MCF 10A (cell line): ENCODE measurements at regions of chr12 and their contacts with region 1.

Region 1: GRCh38 chr12:40208707-40209446 is 15.9 kb upstream of the LRRK2 start:
- DNase-seq: no peak
- H3K4me3 Mint-ChIP-seq: no peak overlapping the region
- H3K27ac Mint-ChIP-seq: peak overlapping the region; percentile 13
- H3K4me1 Mint-ChIP-seq: peaks cover 19% of the 10 kb centered on the region
- H3K27me3 Mint-ChIP-seq: no peaks in the 10 kb centered on the region
- CTCF ChIP-seq: no peak

Region 2: DNA sequence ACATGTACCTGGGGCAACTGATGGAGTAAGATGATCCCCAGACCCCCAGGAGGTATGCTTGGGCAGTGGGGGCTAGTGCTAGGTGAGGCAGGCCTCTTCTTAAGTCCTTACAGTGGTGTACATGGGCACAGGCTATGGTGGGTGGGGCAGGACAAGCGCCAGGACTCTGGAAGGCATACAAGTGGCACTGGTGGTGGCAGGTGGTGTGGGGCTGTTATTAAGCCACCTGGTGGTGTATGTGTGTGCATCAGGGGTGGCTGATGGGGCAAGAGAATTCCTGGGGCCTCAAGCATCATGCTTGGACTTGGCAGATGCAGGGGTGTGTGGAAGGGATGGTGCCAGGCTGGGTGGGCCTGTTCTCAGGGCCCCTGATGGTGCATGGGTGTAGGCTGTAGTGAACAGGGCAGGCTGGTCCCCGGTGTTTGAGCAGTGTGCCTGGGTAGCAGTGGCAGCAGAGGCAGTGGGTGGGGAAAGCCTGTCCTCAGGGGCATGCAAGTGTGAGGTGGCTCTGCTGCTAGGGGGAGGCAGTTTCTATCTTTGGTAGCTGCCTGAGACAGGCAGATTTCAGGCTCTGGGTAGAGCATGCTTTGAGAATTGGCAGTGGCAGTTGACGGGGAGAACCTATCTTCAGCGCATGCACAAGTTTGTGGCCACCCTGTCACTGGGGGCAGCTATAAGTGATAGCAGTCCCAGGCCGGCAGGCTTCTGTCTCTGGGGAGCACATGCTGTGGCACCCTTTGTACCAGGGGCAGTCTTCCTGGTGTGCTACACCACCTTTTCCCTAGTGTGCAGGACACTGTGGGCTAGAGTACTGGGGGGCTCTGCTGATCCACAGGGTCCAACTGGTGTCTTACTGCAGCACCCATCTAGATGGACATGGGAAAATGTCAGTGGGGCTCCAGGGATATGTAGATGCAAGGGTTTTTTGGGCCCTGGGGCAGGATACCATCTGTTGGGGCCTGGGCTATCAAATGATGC is 536.7 kb before region 1 on chr12:
- CTCF ChIA-PET with region 1: no interaction called
- POLR2A ChIA-PET with region 1: no interaction called
- intact Hi-C with region 1: no loop called
- DNase-seq: no peak
- H3K4me3 Mint-ChIP-seq: no peak overlapping the region
- H3K27ac Mint-ChIP-seq: no peak overlapping the region
- H3K4me1 Mint-ChIP-seq: no peaks in the 10 kb centered on the region
- H3K27me3 Mint-ChIP-seq: no peaks in the 10 kb centered on the region
- CTCF ChIP-seq: no peak

Region 3: DNA sequence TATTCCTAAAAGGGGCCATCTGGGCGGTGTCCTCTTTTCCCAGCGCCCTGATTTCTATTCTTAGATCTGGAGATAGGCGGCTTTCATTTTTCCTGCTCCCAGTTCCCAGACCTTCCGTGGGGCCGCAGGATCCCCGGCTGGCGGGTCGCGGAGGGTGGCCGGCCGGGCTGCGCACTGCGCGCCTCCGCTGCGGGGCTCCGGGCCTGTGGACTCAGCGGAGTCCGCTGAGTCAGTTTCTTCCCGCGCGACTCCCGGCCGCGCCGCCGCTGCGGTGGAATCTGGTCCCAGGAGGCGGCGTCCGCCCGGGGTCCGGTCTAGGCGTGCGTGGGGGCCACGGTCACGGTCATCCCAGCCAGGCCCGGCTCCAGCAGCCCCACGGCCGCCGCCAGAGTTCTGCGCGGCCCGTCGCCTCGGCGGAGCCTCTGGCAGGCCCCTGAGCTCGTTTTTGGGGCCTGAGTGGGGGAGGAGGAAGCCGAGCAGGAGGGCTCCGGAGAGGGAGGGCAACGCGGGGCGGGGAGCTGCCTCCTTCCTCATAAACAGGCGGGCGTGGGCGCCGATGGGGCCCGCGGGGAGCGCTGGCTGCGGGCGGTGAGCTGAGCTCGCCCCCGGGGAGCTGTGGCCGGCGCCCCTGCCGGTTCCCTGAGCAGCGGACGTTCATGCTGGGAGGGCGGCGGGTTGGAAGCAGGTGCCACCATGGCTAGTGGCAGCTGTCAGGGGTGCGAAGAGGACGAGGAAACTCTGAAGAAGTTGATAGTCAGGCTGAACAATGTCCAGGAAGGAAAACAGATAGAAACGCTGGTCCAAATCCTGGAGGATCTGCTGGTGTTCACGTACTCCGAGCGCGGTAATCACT is 15.8 kb after region 1 on chr12 and contains the start of gene LRRK2:
- CTCF ChIA-PET with region 1: interaction called, 5 read pairs
- POLR2A ChIA-PET with region 1: interaction called, 20 read pairs
- intact Hi-C with region 1: no loop called
- DNase-seq: peak; percentile 58
- H3K4me3 Mint-ChIP-seq: peak within 1 kb of the TSS; percentile 71
- H3K27ac Mint-ChIP-seq: peak within 1 kb of the TSS; percentile 79
- H3K4me1 Mint-ChIP-seq: peaks cover 42% of the 10 kb centered on the region
- H3K27me3 Mint-ChIP-seq: no peaks in the 10 kb centered on the region
- CTCF ChIP-seq: no peak
- total RNA-seq, gene LRRK2: 4.2 and 4.5 TPM in 2 replicates